Activated CD8-positive, alpha-beta memory T cell treated with anti-CD3 and anti-CD28 coated beads, Interleukin-2, amount 10 ng/mL, durations not matched to agents 7 days and 5 days (primary cell): ENCODE measurements at regions of chr17 and their contacts with region 1.

Region 1: DNA sequence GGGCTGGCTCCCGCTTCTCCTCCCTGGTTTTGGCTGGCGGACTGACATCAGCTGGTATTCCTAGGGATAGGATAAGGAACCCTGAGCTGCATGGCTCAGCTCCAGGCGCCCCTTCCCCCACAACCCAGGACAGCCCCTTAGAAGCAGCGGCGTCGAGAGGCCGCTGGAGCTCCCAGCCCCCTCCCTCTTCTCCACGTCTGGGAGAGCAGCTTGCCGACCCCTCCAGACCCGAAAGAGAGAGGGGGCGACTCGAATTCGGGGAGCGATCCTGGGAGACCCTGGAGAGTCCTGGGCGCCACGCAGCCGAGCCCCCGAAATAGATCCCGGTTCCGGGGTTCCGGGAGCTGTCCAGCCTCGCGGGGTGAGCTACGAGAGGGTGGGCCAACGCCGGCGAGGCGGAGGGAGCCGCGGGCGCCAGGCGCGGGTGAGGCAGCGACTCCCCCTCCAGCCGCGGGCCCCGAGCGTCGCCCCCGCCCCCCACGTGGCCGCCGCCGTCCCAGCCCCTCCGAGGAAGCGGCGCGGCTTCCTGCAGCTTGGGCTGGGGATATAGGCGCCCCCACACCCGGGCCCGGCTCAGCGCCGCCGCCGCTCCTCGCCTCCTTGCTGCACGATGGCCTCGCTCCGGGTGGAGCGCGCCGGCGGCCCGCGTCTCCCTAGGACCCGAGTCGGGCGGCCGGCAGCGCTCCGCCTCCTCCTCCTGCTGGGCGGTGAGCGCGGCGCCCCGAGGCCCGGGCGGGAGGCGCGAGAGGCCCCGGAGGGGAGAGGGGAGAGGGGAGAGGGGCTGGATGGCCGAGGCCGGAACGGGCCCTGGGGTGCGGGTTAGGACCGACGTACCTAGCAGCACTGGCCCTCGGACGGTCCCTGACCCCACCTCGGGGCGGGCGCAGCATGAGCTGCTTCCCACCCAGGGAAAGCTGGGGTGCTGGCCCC is at the start of gene RAMP2:
- DNase-seq: no peak
- ATAC-seq: peak; percentile 42
- H3K4me3 Mint-ChIP-seq: no peak within 1 kb of the TSS
- H3K27ac Mint-ChIP-seq: no peak within 1 kb of the TSS
- H3K4me1 Mint-ChIP-seq: peaks cover 3% of the 10 kb centered on the region
- H3K27me3 Mint-ChIP-seq: peaks cover 60% of the 10 kb centered on the region
- total RNA-seq, gene RAMP2: not detected

Region 2: DNA sequence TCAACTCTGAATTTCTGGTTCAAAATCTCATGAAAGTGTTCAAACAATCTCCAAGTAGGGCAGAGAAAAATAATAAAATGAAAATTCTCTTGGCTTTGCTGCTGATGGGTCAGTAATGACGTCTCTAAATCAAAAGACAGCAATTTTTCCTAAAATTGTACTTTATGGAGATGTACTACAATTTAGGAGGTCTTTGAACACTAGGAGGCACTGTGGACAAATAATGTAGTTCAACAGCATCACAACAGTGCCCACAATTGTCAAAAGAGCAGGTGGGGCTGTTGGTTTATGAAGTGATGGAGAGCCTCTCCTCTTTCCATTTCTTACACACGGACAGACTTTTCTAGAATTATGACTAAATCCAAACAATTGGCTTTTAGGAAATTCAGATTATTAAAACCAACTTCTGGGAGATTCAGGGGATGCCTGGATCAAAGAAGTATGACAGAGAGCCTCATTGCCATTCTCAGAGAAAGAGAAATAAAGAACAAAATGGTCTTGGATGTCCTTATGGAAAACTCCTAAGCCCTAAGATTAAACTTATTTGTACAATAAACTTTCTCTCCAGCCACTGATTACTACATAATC is 39.8 kb before region 1 on chr17:
- CTCF ChIA-PET with region 1: interaction called, 20 read pairs
- DNase-seq: no peak
- ATAC-seq: peak; percentile 71
- H3K4me3 Mint-ChIP-seq: no peak overlapping the region
- H3K27ac Mint-ChIP-seq: no peak overlapping the region
- H3K4me1 Mint-ChIP-seq: peaks cover 2% of the 10 kb centered on the region
- H3K27me3 Mint-ChIP-seq: no peaks in the 10 kb centered on the region

Region 3: GRCh38 chr17:42750739-42751344 is 10.1 kb before region 1 on chr17:
- CTCF ChIA-PET with region 1: interaction called, 11 read pairs
- DNase-seq: no peak
- ATAC-seq: no peak
- H3K4me3 Mint-ChIP-seq: no peak overlapping the region
- H3K27ac Mint-ChIP-seq: no peak overlapping the region
- H3K4me1 Mint-ChIP-seq: no peaks in the 10 kb centered on the region
- H3K27me3 Mint-ChIP-seq: peaks cover 64% of the 10 kb centered on the region

Region 4: DNA sequence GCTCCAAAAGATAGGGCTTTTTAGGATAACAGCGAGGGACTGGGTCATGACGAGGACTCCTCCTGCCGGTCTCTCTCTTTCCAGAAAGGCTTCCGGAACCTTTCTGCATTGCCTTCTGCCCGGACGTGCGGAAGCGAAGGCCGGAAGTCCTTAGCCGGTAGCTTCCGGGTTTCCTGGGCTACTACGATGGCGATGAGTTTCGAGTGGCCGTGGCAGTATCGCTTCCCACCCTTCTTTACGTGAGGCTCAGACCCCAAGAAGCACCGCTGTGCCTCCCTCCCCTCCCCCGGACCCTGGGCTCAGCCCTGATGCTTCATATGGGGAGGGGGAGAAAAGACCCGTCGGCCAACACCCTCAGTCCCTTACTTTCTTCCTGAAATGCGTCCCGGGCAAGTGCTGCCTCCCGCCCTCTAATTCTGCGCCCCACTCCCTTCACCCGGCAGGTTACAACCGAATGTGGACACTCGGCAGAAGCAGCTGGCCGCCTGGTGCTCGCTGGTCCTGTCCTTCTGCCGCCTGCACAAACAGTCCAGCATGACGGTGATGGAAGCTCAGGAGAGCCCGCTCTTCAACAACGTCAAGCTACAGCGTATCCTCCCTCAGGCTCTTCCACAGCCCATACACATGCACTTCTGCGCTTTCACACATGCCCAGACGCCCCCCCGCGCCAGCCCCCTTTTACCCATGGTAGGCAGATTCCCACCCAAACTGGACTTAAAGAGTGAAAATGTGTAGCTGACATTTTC is 12.5 kb after region 1 on chr17 and contains the start of gene VPS25:
- CTCF ChIA-PET with region 1: interaction called, 57 read pairs
- DNase-seq: peak; percentile 84
- ATAC-seq: peak; percentile 97
- H3K4me3 Mint-ChIP-seq: peak within 1 kb of the TSS; percentile 99
- H3K27ac Mint-ChIP-seq: peak within 1 kb of the TSS; percentile 98
- H3K4me1 Mint-ChIP-seq: peaks cover 35% of the 10 kb centered on the region
- H3K27me3 Mint-ChIP-seq: no peaks in the 10 kb centered on the region
- total RNA-seq, gene VPS25: 62.8 to 77.8 TPM

Region 5: GRCh38 chr17:42779936-42780850 is 19.3 kb after region 1 on chr17 and contains the start of gene WNK4:
- CTCF ChIA-PET with region 1: interaction called, 57 read pairs
- DNase-seq: no peak
- ATAC-seq: peak; percentile 28
- H3K4me3 Mint-ChIP-seq: no peak within 1 kb of the TSS
- H3K27ac Mint-ChIP-seq: no peak within 1 kb of the TSS
- H3K4me1 Mint-ChIP-seq: peaks cover 28% of the 10 kb centered on the region
- H3K27me3 Mint-ChIP-seq: peaks cover 41% of the 10 kb centered on the region
- total RNA-seq, gene WNK4: 0.20 to 0.59 TPM